IMR-90 (cell line): ENCODE measurements at regions of chr6 and their contacts with region 1.

Region 1: DNA sequence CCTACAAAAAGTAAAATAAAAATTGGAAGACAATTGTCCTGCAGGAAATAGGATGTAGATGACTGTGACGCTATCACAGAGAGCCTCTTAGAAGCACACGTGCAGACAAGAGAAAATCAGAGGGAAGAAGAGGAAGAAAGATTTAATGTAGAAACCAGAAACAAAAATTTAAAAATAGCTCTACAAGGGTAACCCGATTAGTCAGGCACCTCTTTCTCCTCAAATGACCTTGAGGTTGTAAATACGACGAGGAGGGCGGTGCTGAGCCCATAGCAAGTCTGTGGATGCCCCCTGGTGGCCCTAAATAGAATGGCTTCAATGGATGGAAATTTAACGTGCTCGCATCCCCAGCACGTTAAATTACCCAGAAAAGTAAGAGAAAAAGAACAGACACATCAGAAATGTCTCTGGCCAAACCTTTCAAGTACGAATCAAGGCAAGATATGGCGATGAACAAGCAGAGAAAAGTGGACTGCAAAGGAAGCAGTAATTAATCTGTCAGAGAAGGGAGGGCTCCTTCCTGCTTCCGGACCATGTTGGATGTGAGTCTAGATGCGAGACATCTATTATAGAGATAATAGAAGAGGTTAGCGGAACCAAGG is 4.2 kb upstream of the PRPH2 start:
- DNase-seq: peak; percentile 91
- ATAC-seq: peak; percentile 94
- H3K4me3 ChIP-seq: peak overlapping the region; percentile 43
- H3K27ac ChIP-seq: peak overlapping the region; percentile 92
- H3K4me1 ChIP-seq: peaks cover 9% of the 10 kb centered on the region
- H3K27me3 ChIP-seq: no peaks in the 10 kb centered on the region
- CTCF ChIP-seq: peak; percentile 96
- POLR2A ChIP-seq: no peak
- RAD21 ChIP-seq: peak; percentile 94

Region 2: GRCh38 chr6:42618686-42619085 is 107.9 kb before region 1 on chr6:
- CTCF ChIA-PET with region 1: no interaction called
- POLR2A ChIA-PET with region 1: no interaction called
- dilution Hi-C with region 1: no loop called
- in situ Hi-C with region 1: no loop called
- intact Hi-C with region 1: no loop called
- DNase-seq: peak; percentile 83
- ATAC-seq: no peak
- H3K4me3 ChIP-seq: no peak overlapping the region
- H3K27ac ChIP-seq: no peak overlapping the region
- H3K4me1 ChIP-seq: no peaks in the 10 kb centered on the region
- H3K27me3 ChIP-seq: no peaks in the 10 kb centered on the region
- CTCF ChIP-seq: no peak
- POLR2A ChIP-seq: no peak
- RAD21 ChIP-seq: no peak

Region 3: DNA sequence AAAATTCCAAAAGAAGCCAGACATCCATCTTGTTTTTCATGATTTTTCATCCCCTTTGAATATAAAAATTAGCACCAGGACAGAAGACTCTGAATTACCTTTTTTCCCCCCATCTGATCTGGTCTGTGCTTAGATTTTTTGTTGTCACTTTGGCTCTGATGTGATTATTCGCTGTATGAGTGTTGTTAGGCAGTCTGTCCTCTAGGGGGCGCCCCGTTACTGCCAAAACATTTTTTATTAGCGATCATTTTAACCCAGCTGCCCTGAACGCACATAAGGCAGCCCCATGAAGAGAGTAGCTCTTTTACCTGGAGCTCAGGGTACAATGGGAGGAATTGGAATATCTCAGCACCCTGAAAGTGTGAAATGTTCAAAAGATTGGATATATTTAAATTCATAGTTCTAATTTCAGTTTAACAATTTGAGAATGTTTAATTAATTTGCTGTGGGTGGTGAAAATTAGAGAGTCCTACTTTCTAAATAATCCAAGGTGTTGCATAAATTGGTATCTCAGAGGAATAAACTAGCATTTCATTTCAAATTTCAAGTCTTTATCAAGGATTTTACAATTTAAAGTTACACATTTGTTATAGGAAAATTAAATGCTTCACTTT is 64.9 kb before region 1 on chr6:
- CTCF ChIA-PET with region 1: interaction called, 6 read pairs
- POLR2A ChIA-PET with region 1: no interaction called
- dilution Hi-C with region 1: no loop called
- in situ Hi-C with region 1: no loop called
- intact Hi-C with region 1: loop called (anchors 1 kb)
- DNase-seq: peak; percentile 62
- ATAC-seq: peak; percentile 94
- H3K4me3 ChIP-seq: no peak overlapping the region
- H3K27ac ChIP-seq: no peak overlapping the region
- H3K4me1 ChIP-seq: no peaks in the 10 kb centered on the region
- H3K27me3 ChIP-seq: no peaks in the 10 kb centered on the region
- CTCF ChIP-seq: peak; percentile 87
- POLR2A ChIP-seq: 0 out of 2 replicates have a peak, but pooled peaks have one; percentile 29
- RAD21 ChIP-seq: peak; percentile 88

Region 4: GRCh38 chr6:42694586-42694985 is 32.0 kb before region 1 on chr6:
- CTCF ChIA-PET with region 1: interaction called, 6 read pairs
- POLR2A ChIA-PET with region 1: no interaction called
- dilution Hi-C with region 1: no loop called
- in situ Hi-C with region 1: no loop called
- intact Hi-C with region 1: loop called (anchors 1 kb)
- DNase-seq: peak; percentile 67
- ATAC-seq: peak; percentile 46; the same call in 1 of the 2 replicates
- H3K4me3 ChIP-seq: no peak overlapping the region
- H3K27ac ChIP-seq: no peak overlapping the region
- H3K4me1 ChIP-seq: peaks cover 17% of the 10 kb centered on the region
- H3K27me3 ChIP-seq: no peaks in the 10 kb centered on the region
- CTCF ChIP-seq: no peak
- POLR2A ChIP-seq: no peak
- RAD21 ChIP-seq: no peak

Region 5: DNA sequence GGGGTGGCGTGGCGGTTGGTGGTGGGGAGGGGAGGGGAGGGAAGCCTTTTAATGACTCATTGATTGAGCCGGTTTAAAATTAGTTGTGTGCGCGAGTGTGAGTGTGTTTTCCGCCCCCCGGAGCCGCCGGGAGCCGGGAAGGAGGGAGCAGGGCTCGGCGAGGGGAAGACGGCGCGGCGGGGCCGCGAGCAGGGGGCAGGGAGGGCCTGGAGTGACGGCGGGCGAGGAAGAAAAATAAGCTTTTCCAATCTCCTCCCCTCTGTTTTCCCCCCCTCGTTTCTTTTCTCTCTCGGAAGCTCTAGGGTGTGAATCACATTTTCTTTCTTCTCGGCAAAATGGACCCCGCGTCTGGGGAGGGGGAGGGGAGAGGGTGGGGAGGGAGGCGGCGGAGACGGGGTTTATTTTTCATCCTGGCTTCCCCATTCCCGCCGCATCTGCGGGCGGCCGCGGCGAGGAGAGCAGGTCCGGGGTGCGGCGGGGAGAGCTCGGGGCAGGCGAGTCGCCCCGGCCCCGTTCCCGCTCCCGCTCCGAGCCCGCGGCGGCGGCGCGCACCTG is 56.1 kb after region 1 on chr6:
- CTCF ChIA-PET with region 1: no interaction called
- POLR2A ChIA-PET with region 1: interaction called, 3 read pairs
- dilution Hi-C with region 1: no loop called
- in situ Hi-C with region 1: no loop called
- intact Hi-C with region 1: loop called (anchors 2 kb)
- DNase-seq: peak; percentile 90
- ATAC-seq: peak; percentile 84
- H3K4me3 ChIP-seq: peak overlapping the region; percentile 96
- H3K27ac ChIP-seq: peak overlapping the region; percentile 98
- H3K4me1 ChIP-seq: peaks cover 7% of the 10 kb centered on the region
- H3K27me3 ChIP-seq: no peaks in the 10 kb centered on the region
- CTCF ChIP-seq: no peak
- POLR2A ChIP-seq: peak; percentile 79; the same call in 1 of the 2 replicates
- RAD21 ChIP-seq: 0 out of 2 replicates have a peak, but pooled peaks have one; percentile 15